ENCODE measurements at regions of chr11 and their contacts with region 1.

Region 1: GRCh38 chr11:44565211-44565952 is at the start of gene CD82:
- DNase-seq: peak; percentile 97
- ATAC-seq: peak; percentile 86
- H3K4me3 ChIP-seq: peak within 1 kb of the TSS; percentile 58 to 99 (median 81)
- H3K4me3 Mint-ChIP-seq: peak within 1 kb of the TSS; percentile 92
- H3K27ac ChIP-seq: peak within 1 kb of the TSS; percentile 46 to 80
- H3K27ac Mint-ChIP-seq: peak within 1 kb of the TSS; percentile 88
- H3K4me1 ChIP-seq: peaks cover 58 to 77% of the 10 kb centered on the region in 2 donors
- H3K4me1 Mint-ChIP-seq: peaks cover 75% of the 10 kb centered on the region
- H3K27me3 ChIP-seq: no peaks in the 10 kb centered on the region
- H3K27me3 Mint-ChIP-seq: no peaks in the 10 kb centered on the region
- CTCF ChIP-seq: peak; percentile 47
- total RNA-seq, gene CD82: 438 and 451 TPM in 2 replicates

Region 2: DNA sequence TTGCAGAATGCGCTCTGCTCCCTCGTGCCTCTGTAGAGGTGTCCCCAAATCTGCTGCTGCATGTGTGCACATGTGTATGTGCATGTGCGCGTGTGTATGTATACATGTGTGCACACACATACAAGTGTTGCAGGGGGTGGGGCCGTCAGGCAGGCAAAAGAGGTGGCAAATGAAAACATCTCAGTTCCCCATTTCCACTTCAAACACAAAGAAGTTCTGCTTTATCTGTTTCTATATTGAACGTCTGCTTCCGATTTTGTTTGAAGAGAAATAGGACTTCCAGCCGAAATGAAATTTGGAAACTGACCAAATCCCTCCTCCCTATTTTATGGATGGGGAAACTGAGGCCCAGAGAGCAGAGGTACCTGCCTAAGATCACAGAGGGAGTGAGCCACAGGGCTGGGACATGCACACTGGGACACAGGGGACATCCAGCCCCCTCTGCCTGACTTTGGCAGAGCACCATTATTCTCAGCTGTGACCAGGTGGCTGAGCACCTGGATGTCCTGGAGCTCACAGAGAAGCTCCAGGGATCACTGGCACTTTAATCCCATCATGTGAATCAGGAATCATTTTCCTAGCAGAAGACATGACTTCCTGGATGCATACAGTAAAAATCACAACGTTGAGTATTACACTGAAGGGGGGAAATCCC is 214.2 kb before region 1 on chr11:
- CTCF ChIA-PET with region 1: no interaction called
- POLR2A ChIA-PET with region 1: no interaction called
- intact Hi-C with region 1: loop called (anchors 5 kb)
- DNase-seq: peak; percentile 75
- ATAC-seq: peak; percentile 83
- H3K4me3 ChIP-seq: peak overlapping the region; percentile 15 to 45 (median 32)
- H3K4me3 Mint-ChIP-seq: peak overlapping the region; percentile 85
- H3K27ac ChIP-seq: peak overlapping the region; percentile 55 to 56
- H3K27ac Mint-ChIP-seq: peak overlapping the region; percentile 85
- H3K4me1 ChIP-seq: peaks cover 20 to 31% of the 10 kb centered on the region in 2 donors
- H3K4me1 Mint-ChIP-seq: peaks cover 39% of the 10 kb centered on the region
- H3K27me3 ChIP-seq: peaks cover 0 to 4% (median 0%) of the 10 kb centered on the region in 4 experiments
- H3K27me3 Mint-ChIP-seq: peaks cover 25% of the 10 kb centered on the region
- CTCF ChIP-seq: no peak

Region 3: GRCh38 chr11:44466531-44467205 is 98.7 kb before region 1 on chr11:
- CTCF ChIA-PET with region 1: no interaction called
- POLR2A ChIA-PET with region 1: no interaction called
- intact Hi-C with region 1: no loop called
- DNase-seq: no peak
- ATAC-seq: no peak
- H3K4me3 ChIP-seq: no peak overlapping the region
- H3K4me3 Mint-ChIP-seq: no peak overlapping the region
- H3K27ac ChIP-seq: no peak overlapping the region
- H3K27ac Mint-ChIP-seq: no peak overlapping the region
- H3K4me1 ChIP-seq: no peaks in the 10 kb centered on the region
- H3K4me1 Mint-ChIP-seq: no peaks in the 10 kb centered on the region
- H3K27me3 ChIP-seq: peaks cover 0 to 10% (median 0%) of the 10 kb centered on the region in 4 experiments
- H3K27me3 Mint-ChIP-seq: peaks cover 21% of the 10 kb centered on the region
- CTCF ChIP-seq: no peak

Region 4: DNA sequence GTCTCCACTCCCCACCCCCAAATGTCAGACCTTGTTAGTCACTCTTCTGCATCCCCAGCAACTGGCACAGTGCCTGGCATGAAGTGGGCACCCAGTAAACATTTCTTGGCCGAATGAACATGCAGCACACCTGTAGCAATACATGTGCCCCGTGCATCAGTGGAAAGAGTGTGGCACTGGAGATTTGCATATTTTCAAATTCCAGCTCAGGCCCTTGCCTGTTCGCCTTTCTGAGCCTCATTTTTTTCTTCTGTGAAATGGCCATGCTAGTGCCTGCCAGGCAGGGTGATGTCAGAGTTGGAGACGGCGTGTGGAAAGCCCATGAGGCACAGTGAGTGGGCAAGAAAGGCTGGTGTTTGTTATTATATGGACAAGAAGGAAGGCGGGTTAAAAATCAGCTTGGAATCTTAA is 38.8 kb after region 1 on chr11:
- CTCF ChIA-PET with region 1: interaction called, 816 read pairs
- POLR2A ChIA-PET with region 1: interaction called, 59 read pairs
- intact Hi-C with region 1: loop called (anchors 1 kb)
- DNase-seq: peak; percentile 67
- ATAC-seq: peak; percentile 31
- H3K4me3 ChIP-seq: peak overlapping the region in 4 of 5 experiments; percentile 14 to 49 (median 28)
- H3K4me3 Mint-ChIP-seq: peak overlapping the region; percentile 83
- H3K27ac ChIP-seq: peak overlapping the region; percentile 90 to 99
- H3K27ac Mint-ChIP-seq: peak overlapping the region; percentile 94
- H3K4me1 ChIP-seq: peaks cover 98 to 100% of the 10 kb centered on the region in 2 donors
- H3K4me1 Mint-ChIP-seq: peaks cover 97% of the 10 kb centered on the region
- H3K27me3 ChIP-seq: no peaks in the 10 kb centered on the region
- H3K27me3 Mint-ChIP-seq: no peaks in the 10 kb centered on the region
- CTCF ChIP-seq: no peak

Region 5: DNA sequence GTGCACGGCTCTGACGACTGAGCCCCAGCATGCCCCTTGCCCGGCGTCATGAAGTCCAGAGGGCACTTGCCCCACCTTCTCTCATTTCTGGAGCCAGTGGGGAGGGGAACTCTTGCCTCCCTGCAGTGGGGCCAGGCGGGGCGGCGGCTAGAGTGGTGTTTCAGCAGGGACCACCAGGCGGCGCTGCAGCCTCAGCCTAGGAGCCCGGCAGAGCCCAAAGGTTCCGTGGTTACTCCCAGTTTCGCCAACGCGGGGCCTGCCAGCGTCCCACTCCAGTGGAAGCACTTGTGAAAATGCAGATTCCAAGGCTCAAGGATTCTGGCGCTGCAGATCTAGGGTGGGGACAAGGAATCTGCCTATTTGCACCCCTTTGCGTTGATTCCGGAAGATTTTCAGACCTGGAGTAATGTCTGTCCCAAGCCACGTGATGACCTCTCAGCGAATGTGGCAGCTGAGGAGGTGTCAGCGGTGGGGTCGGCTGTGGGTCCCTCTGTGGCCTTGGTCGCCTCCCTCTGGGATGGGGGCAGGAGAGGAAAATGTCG is 55.8 kb after region 1 on chr11:
- CTCF ChIA-PET with region 1: interaction called, 816 read pairs
- POLR2A ChIA-PET with region 1: interaction called, 16 read pairs
- intact Hi-C with region 1: no loop called
- DNase-seq: peak; percentile 70
- ATAC-seq: peak; percentile 53
- H3K4me3 ChIP-seq: no peak overlapping the region
- H3K4me3 Mint-ChIP-seq: no peak overlapping the region
- H3K27ac ChIP-seq: no peak overlapping the region
- H3K27ac Mint-ChIP-seq: peak overlapping the region; percentile 50
- H3K4me1 ChIP-seq: peaks cover 20 to 30% of the 10 kb centered on the region in 2 donors
- H3K4me1 Mint-ChIP-seq: peaks cover 73% of the 10 kb centered on the region
- H3K27me3 ChIP-seq: no peaks in the 10 kb centered on the region
- H3K27me3 Mint-ChIP-seq: no peaks in the 10 kb centered on the region
- CTCF ChIP-seq: peak; percentile 81

Region 6: GRCh38 chr11:45079943-45080719 is 514.7 kb after region 1 on chr11:
- CTCF ChIA-PET with region 1: no interaction called
- POLR2A ChIA-PET with region 1: no interaction called
- intact Hi-C with region 1: loop called (anchors 5 kb)
- DNase-seq: peak; percentile 78
- ATAC-seq: peak; percentile 59
- H3K4me3 ChIP-seq: peak overlapping the region in 2 of 5 experiments; percentile 5 to 6
- H3K4me3 Mint-ChIP-seq: peak overlapping the region; percentile 71
- H3K27ac ChIP-seq: peak overlapping the region; percentile 65 to 73
- H3K27ac Mint-ChIP-seq: peak overlapping the region; percentile 93
- H3K4me1 ChIP-seq: peaks cover 52 to 65% of the 10 kb centered on the region in 2 donors
- H3K4me1 Mint-ChIP-seq: peaks cover 74% of the 10 kb centered on the region
- H3K27me3 ChIP-seq: no peaks in the 10 kb centered on the region
- H3K27me3 Mint-ChIP-seq: no peaks in the 10 kb centered on the region
- CTCF ChIP-seq: no peak

Measured in B cell (primary cell).